ENCODE measurements at regions of chr7 and their contacts with region 1.

Region 1: DNA sequence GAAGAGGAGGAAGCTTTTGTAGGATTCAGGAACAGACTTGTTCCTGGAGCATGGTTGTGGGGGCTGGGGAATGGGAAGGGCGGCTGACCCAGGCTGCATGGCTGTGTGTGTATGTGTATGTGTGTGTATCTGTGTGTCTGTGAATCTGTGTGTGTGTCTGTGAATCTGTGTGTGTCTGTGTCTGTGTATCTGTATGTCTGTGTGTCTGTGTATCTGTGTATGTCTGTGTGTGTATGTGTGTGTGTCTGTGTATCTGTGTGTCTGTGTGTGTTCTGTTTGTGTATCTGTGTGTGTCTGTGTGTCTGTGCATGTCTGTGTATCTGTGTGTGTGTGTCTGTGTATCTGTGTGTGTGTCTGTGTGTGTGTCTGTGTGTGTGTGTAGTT is 6.6 kb upstream of the STX1A start:
- DNase-seq: no peak
- H3K4me3 ChIP-seq: no peak overlapping the region
- H3K27ac ChIP-seq: no peak overlapping the region
- H3K27me3 ChIP-seq: no peaks in the 10 kb centered on the region
- CTCF ChIP-seq: peak in 8 of 56 donors; percentile 3 to 52 (median 20)

Region 2: DNA sequence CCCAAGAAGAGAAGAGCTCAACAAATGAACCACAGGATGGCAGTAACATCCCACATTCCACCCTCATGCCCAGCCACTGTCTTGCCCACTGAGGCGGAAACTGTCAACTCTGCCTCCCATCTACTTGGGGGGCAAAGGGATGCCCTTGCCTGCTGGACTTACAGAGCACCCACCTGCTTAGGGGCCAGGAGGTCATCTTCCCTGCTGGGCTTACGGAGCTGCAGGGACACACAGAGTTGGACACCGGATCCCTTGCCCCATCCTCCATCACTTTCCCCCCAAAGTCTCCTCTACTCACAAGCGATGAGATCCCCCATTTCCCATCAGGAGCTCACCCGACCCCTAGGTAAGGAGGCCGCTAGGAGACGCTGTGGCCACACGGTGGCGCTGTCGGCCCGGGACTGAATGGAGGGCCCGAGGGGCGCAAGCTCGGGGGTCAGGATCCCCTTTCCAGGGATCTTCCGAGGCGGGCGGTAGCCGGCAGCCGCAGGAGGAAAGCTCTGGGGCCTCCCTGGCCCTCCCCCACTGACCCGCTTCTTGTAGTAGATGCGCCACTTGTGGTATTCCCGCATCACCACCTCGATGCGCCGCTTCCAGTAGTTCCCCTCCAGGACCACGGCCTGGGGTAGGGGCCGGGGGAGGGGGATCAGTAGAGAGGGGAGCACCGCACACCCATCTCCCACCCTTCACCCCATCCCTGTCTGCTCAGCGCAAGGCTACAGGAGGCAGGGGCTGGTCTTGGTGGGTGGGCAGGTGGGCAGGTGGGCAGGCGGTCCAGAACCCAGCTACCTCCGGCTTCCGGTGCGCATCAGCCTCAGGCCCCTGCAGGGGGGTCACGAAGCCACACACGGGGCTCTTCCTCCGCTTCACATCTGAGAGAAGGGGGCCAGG is 119.0 kb before region 1 on chr7:
- intact Hi-C with region 1: loop called (anchors 1 to 2 kb)
- DNase-seq: peak in 4 of 10 donors; percentile 50 to 72 (median 58)
- H3K4me3 ChIP-seq: peak overlapping the region in 38 of 59 donors; percentile 2 to 58 (median 38)
- H3K27ac ChIP-seq: no peak overlapping the region
- H3K27me3 ChIP-seq: no peaks in the 10 kb centered on the region
- CTCF ChIP-seq: peak; percentile 54 to 98 (median 94)

Region 3: DNA sequence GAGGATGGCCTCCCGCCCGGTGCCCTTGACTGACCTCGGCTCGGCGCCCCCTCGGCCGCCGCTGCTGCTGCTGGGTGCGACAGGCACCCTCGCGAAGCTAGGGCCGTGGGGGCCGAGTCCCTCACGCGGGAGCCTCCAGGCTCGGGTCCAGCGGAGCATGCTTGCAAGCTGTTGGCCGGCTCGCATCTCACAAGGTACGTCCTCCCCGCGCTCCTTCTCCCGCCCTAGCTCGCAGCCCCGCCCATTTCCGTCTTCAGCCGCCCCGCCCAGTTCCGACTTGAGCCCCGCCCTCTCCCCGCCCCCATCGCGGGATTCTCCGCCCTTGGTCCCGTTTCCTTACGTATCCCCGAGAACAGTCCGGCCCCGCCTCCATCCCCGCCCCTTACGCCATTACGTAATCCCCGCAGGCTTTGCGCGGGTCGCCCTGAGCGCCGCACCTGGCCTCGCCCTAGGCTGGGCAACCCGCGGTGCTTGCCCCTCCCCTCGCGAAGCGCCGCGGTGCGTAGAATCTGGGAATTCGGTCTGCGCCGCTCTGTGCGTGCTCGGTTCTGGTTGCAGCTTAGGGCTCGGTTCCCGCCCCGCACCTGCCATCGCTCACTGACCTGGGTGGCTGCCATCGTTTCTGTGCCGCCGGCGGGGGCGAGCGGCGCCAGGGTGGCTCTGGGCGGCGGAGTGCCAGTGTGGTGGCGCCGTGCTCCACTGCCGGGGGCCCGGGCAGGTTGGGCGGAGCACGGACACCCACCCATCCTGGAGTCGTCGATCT is 12.7 kb after region 1 on chr7 and contains the start of gene ABHD11:
- intact Hi-C with region 1: loop called in 1 of 2 experiments (anchors 2 kb)
- DNase-seq: peak; percentile 98 to 100 (median 99)
- H3K4me3 ChIP-seq: peak within 1 kb of the TSS; percentile 57 to 100 (median 93)
- H3K27ac ChIP-seq: peak within 1 kb of the TSS in 58 of 59 donors; percentile 49 to 98 (median 90)
- H3K27me3 ChIP-seq: no peaks in the 10 kb centered on the region
- CTCF ChIP-seq: peak in 8 of 56 donors; percentile 2 to 34 (median 12)
- total RNA-seq, gene ABHD11: 8.9 to 40.2 (median 19.5) TPM

Region 4: DNA sequence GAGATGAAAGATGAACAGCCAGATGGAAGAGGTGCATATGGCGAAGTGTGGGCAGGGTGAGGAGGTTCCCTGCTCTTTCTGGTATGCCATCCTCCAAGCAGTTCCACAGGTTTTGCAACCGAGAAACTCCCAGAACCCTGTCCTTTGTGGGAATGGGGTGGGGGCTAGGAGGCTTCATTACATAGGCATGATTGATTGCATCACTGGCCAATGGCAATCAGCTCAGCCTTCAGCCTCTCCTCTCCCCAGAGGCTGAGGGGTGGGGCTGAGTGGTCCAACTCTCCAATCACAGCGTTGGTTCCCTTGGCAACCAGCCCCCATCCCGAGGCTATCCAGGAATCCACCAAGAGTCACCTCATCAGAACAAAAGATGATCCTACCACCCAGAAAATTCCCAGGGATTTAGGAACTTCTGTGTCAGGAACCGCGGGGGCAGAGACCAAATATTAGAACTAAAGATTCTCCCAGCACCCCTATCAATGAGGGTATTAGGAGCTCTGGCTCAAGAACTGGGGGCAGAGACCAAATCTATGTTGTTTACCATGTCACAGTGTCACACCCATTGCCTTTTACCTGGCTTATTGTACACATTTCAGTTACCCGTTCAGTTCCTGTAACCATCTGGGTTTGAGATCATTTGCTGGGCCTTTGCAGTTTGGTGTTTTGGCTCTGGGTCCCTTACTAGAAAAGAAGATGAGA is 66.7 kb after region 1 on chr7:
- intact Hi-C with region 1: no loop called
- DNase-seq: peak in 7 of 10 donors; percentile 21 to 61 (median 52)
- H3K4me3 ChIP-seq: no peak overlapping the region
- H3K27ac ChIP-seq: no peak overlapping the region
- H3K27me3 ChIP-seq: no peaks in the 10 kb centered on the region
- CTCF ChIP-seq: no peak

Region 5: DNA sequence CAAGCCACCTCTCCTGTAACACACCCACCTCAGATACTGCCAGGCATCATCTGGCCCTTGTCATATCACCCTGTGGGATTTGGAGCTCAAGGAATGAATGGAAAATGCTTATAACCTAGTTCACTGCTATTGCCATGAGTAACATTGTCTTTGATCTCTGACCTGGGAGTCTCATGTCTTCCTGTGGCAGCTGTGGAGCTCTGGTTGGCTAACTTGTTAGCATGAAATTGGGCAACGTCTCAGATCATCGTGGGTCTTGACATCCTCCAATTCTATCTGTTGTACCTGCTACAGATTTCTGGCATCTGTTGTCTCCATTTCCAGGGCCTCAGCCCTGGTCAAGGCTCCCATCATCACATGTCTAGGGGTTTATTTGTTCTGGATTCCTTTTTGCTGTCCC is 132.7 kb after region 1 on chr7:
- intact Hi-C with region 1: loop called in 1 of 2 experiments (anchors 5 kb)
- DNase-seq: no peak
- H3K4me3 ChIP-seq: no peak overlapping the region
- H3K27ac ChIP-seq: no peak overlapping the region
- H3K27me3 ChIP-seq: peaks cover 0 to 3% (median 0%) of the 10 kb centered on the region in 45 donors
- CTCF ChIP-seq: no peak